ENCODE measurements at regions of chr3 and their contacts with region 1.

Region 1: DNA sequence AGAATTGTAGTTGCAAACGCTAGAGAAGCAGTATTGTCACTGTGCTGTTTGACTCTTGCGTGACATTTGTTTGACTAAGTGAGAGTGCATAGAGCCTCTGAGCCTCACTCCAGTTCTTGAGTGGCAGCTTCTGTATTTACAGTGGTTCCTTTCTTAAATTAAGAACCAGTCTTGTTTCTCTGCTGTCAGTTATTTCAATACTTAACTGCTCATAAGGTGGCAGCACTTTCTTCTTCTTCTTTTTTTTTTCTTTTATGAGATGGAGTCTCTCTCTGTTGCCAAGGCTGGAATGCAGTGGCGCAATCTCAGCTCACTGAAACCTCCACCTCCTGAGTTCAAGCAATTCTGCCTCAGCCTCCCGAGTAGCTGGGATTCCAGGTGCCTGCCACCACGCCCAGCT is 372.1 kb downstream of the LPP start:
- DNase-seq: no peak
- H3K4me3 ChIP-seq: no peak overlapping the region
- H3K27ac ChIP-seq: no peak overlapping the region
- H3K4me1 ChIP-seq: peaks cover 1 to 23% of the 10 kb centered on the region in 2 donors
- H3K27me3 ChIP-seq: no peaks in the 10 kb centered on the region
- CTCF ChIP-seq: peak in 1 of 3 experiments; percentile 12

Region 2: DNA sequence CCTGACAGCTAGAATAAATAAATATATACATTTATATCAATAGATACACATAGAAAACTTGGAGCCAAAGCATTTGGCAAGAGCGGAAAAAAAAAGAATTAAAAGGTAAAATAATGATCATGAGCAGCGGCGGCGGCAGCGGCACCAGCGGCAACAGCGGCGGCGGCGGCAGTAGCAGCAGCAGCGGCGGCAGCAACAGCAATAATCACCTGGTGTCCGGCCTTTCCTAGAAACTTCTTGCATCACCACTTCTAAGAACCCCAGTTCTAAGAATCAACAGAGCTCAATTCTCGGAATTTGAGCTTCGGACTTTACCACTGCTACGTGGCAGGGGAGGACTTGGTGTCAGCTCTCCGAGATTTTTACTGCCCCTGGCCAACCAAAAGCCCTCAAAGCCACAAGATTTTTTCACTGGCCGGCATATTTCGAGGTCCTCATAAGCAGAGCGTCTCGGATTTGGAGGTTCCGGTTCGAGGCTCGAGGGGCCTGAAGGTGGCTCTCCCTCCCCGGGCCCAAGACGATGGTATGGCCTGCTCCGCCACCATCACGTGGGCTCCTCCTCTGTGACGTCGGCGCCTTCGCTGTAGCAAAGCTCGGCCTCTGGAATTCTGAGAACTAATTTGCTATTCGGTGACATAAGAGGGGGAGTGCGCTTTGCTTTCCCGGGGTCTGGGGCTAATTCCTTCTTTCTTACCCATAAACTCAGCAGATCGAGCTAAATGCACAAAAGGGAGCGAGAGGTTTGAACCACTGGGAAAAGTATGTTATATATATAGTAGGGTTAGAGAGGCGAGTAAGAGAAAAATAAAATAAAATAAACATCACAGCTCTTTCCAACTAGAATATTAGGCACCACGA is 780.6 kb before region 1 on chr3 and contains the start of gene BCL6:
- intact Hi-C with region 1: loop called (anchors 10 kb)
- DNase-seq: peak; percentile 66 to 97
- H3K4me3 ChIP-seq: peak within 1 kb of the TSS; percentile 73 to 75
- H3K27ac ChIP-seq: peak within 1 kb of the TSS; percentile 98 to 99
- H3K4me1 ChIP-seq: peaks cover 9 to 12% of the 10 kb centered on the region in 2 donors
- H3K27me3 ChIP-seq: no peaks in the 10 kb centered on the region
- CTCF ChIP-seq: peak in 1 of 3 experiments; percentile 12
- total RNA-seq, gene BCL6: 97.9 TPM

Region 3: GRCh38 chr3:188507244-188507720 is 18.8 kb before region 1 on chr3:
- intact Hi-C with region 1: loop called (anchors 2 kb)
- DNase-seq: no peak
- H3K4me3 ChIP-seq: no peak overlapping the region
- H3K27ac ChIP-seq: peak overlapping the region; percentile 15 to 35
- H3K4me1 ChIP-seq: peaks cover 4 to 30% of the 10 kb centered on the region in 2 donors
- H3K27me3 ChIP-seq: no peaks in the 10 kb centered on the region
- CTCF ChIP-seq: no peak